ENCODE measurements at regions of chr6 and their contacts with region 1.

Region 1: DNA sequence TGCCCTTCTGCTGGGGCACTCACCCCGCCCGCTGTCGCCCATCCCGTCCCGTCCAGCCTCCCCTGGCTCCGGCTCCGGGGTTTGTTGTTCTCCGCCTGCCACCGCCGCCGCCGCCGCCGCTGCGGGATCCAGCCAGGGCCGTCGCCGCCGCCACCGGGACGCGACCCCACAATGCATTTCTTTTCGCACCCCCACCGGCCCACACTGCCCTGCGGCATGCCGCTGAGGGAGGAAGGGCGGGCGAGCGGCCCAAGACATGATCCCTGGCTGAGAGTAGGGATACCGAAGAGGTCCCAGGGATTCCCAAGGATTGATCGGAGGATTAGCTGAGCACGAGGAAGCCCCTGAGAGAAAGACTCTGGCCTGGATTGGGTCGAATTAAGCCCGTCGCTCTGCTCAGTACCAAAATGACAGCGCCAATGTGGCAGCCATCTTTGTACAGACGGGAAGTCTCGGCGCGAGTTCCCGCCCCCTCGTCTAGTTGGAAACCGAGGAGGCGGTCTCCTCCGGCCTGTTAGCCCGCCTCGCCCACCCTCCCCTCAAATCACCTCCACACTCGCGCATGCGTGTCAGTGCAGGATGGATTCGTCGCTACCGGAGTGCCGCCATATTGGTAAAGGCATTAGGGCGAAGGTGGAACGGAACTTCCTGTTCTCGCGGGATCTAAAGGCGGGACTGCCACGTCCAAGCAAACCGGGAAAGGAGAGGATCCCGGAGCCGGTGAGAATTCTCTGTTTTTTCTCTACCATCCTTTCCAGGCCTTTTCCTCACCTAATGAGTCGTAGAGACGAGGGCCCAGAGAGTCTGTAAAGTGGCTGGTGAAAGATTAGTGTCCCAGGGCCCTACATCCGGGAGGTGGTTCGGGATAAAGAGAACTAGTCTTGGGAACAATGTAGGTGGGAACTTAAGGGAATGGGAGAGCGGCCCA is at the starts of genes RXRB and SLC39A7:
- DNase-seq: peak; percentile 95 to 99 (median 98)
- H3K4me3 ChIP-seq: peak within 1 kb of the TSS; percentile 99
- H3K4me3 Mint-ChIP-seq: peak within 1 kb of the TSS; percentile 98 to 100 (median 99)
- H3K27ac ChIP-seq: peak within 1 kb of the TSS; percentile 88
- H3K27ac Mint-ChIP-seq: peak within 1 kb of the TSS; percentile 96 to 99 (median 98)
- H3K4me1 ChIP-seq: peaks cover 62% of the 10 kb centered on the region
- H3K4me1 Mint-ChIP-seq: peaks cover 45 to 82% (median 64%) of the 10 kb centered on the region in 4 donors
- H3K27me3 ChIP-seq: no peaks in the 10 kb centered on the region
- H3K27me3 Mint-ChIP-seq: no peaks in the 10 kb centered on the region
- total RNA-seq, gene RXRB: 89.2 to 94.3 TPM
- total RNA-seq, gene SLC39A7: 40.8 to 40.9 TPM

Region 2: GRCh38 chr6:32195652-32195901 is 1004.9 kb before region 1 on chr6:
- CTCF ChIA-PET with region 1: no interaction called
- POLR2A ChIA-PET with region 1: no interaction called
- intact Hi-C with region 1: loop called (anchors 10 kb)
- DNase-seq: peak; percentile 99 to 100 (median 100)
- H3K4me3 ChIP-seq: peak overlapping the region in 1 of 2 donors; percentile 97
- H3K4me3 Mint-ChIP-seq: peak overlapping the region; percentile 93 to 100 (median 98)
- H3K27ac ChIP-seq: peak overlapping the region; percentile 98
- H3K27ac Mint-ChIP-seq: peak overlapping the region; percentile 97 to 100 (median 99)
- H3K4me1 ChIP-seq: peaks cover 33% of the 10 kb centered on the region
- H3K4me1 Mint-ChIP-seq: peaks cover 23 to 58% (median 27%) of the 10 kb centered on the region in 4 donors
- H3K27me3 ChIP-seq: no peaks in the 10 kb centered on the region
- H3K27me3 Mint-ChIP-seq: peaks cover 0 to 2% of the 10 kb centered on the region in 2 donors

Region 3: DNA sequence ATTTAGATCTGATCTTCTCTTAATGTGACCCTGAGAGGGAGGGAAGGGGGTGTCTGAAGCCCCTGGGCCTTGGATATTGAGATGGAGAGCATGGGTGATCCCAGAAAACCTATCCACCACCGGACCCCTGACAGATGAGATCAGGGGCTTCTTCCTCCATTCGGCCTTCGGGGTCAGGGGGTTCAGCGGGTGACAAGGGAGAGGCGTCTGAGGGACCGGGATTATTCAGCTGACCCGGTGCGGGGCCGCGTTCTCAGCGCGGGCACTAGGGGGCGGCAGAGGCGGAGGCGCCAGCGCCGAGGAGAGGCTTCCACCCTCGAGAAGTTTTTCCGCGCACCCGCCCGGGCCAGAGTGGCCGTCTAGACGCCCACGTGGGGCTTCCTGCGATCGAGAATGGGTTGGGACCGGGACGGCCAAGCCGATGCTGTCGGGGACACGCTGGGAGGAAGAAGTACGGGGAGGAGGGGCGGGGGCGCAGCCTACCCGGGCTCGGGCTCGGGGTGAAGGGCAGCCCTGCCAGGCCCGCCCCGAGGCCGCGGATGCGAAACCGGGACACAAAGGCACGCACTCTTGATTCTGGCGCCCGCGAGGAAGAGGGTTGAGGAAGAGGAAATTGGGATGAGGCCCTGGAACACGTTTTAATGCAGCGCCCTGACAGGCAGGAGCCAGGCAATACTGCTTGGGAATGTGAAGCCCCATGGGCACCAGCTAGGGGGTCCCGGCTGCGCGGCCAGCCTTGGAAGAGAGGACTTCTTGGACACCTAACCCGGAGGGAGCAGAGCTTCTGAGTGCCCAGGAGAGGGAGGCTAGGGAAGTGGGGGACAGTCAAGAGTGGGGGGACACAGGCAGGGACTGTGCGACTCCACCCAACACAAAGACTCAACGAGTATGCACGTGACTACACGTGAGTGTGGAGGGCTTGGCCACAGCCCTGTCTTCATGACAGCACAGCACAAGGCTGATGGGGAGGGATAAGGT is 38.8 kb before region 1 on chr6:
- CTCF ChIA-PET with region 1: interaction called, 55 read pairs
- POLR2A ChIA-PET with region 1: interaction called, 6 read pairs
- intact Hi-C with region 1: loop called (anchors 1 kb)
- DNase-seq: peak; percentile 75 to 84 (median 77)
- H3K4me3 ChIP-seq: peak overlapping the region; percentile 23 to 54
- H3K4me3 Mint-ChIP-seq: peak overlapping the region; percentile 83 to 92 (median 89)
- H3K27ac ChIP-seq: no peak overlapping the region
- H3K27ac Mint-ChIP-seq: peak overlapping the region in 6 of 7 donors; percentile 45 to 91 (median 86)
- H3K4me1 ChIP-seq: peaks cover 5% of the 10 kb centered on the region
- H3K4me1 Mint-ChIP-seq: peaks cover 1 to 11% (median 8%) of the 10 kb centered on the region in 4 donors
- H3K27me3 ChIP-seq: no peaks in the 10 kb centered on the region
- H3K27me3 Mint-ChIP-seq: peaks cover 2 to 8% of the 10 kb centered on the region in 2 donors

Region 4: GRCh38 chr6:33299237-33299944 is 98.9 kb after region 1 on chr6:
- CTCF ChIA-PET with region 1: interaction called, 5 read pairs
- POLR2A ChIA-PET with region 1: interaction called, 7 read pairs
- intact Hi-C with region 1: loop called (anchors 1 kb)
- DNase-seq: peak; percentile 91 to 94 (median 93)
- H3K4me3 ChIP-seq: peak overlapping the region; percentile 71 to 97
- H3K4me3 Mint-ChIP-seq: peak overlapping the region; percentile 99
- H3K27ac ChIP-seq: peak overlapping the region; percentile 94
- H3K27ac Mint-ChIP-seq: peak overlapping the region; percentile 96 to 100 (median 99)
- H3K4me1 ChIP-seq: peaks cover 27% of the 10 kb centered on the region
- H3K4me1 Mint-ChIP-seq: peaks cover 22 to 42% (median 31%) of the 10 kb centered on the region in 4 donors
- H3K27me3 ChIP-seq: no peaks in the 10 kb centered on the region
- H3K27me3 Mint-ChIP-seq: peaks cover 0 to 4% of the 10 kb centered on the region in 2 donors

Region 5: DNA sequence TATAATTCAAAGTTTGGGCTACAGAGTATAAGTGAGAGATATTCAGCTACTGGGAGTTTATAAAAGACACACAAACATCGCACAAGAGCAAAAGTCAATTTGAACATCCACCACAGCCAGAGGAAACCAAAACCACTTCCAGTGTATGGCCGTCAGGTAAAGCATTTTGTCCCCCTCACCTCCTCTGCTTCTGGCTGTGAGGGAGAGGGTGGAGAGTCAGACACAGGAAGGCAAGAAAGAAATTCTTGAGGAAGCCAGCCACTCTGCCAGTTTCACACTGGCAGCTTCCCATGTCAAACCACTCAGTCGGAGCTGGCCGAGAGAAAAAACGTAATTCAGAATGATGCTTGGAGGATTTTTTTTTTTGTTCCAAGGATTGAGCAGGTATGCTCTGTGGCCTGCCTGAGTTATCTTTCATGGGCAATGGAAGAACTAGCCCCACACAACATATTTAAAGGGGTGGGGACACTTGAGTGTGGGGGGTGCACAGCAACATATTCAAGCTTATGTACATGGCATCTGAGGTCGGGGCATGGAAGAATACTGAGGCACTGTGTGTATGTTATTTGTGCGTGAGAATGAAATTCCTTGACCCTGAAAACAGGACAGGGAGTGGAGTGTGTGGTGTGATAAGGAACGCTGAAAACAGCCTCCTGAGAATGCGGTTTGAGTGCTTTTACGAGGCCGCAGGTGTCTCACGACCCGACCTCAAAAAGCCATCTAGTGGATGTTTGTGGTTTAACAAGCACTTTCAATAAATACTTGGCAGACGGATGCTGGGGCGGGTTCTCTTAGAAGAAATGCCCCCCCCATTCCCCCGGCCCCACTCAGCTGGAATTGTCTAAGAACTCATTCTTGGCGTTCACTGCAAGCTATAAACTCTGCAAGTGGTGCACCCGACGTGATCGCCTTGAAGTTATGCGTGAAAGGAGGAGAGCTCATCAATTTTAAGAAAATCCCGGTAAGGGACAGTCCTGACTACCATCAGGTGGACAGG is 144.5 kb after region 1 on chr6:
- CTCF ChIA-PET with region 1: no interaction called
- POLR2A ChIA-PET with region 1: interaction called, 3 read pairs
- intact Hi-C with region 1: loop called (anchors 1 kb)
- DNase-seq: peak; percentile 81 to 87 (median 84)
- H3K4me3 ChIP-seq: peak overlapping the region; percentile 11 to 61
- H3K4me3 Mint-ChIP-seq: peak overlapping the region; percentile 76 to 92 (median 85)
- H3K27ac ChIP-seq: peak overlapping the region; percentile 79
- H3K27ac Mint-ChIP-seq: peak overlapping the region; percentile 88 to 99 (median 98)
- H3K4me1 ChIP-seq: peaks cover 44% of the 10 kb centered on the region
- H3K4me1 Mint-ChIP-seq: peaks cover 23 to 49% (median 37%) of the 10 kb centered on the region in 4 donors
- H3K27me3 ChIP-seq: no peaks in the 10 kb centered on the region
- H3K27me3 Mint-ChIP-seq: no peaks in the 10 kb centered on the region